GM23248 (cell line): ENCODE measurements at regions of chr5 and their contacts with region 1.

Region 1: GRCh38 chr5:17132444-17133083 is 84.9 kb upstream of the BASP1 start:
- DNase-seq: peak; percentile 63
- H3K4me3 ChIP-seq: no peak overlapping the region
- H3K27ac ChIP-seq: no peak overlapping the region
- H3K4me1 ChIP-seq: peaks cover 25% of the 10 kb centered on the region
- H3K27me3 ChIP-seq: no peaks in the 10 kb centered on the region

Region 2: DNA sequence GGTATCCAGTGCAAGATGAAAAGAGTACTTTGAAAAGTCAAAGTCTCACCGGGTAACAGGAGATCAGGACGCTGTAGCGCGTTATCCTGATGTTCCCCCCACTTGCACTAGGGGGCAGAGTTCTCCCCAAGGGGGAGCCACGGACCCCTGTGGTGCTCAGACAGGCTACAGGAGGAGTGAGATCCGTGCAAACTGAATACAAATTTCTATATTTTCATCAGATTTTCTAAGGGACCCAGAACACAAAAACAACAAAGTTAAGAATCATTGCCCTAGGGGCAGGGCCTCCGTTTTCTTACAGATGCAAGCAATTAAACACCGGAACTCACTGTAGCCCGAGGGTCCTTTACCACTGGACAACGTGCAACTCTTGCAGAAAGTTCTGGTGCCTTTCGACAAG is 198.4 kb before region 1 on chr5:
- in situ Hi-C with region 1: loop called (anchors 25 kb)
- DNase-seq: peak; percentile 87
- H3K4me3 ChIP-seq: peak overlapping the region; percentile 94
- H3K27ac ChIP-seq: peak overlapping the region; percentile 70
- H3K4me1 ChIP-seq: peaks cover 25% of the 10 kb centered on the region
- H3K27me3 ChIP-seq: no peaks in the 10 kb centered on the region